Activated CD8-positive, alpha-beta memory T cell treated with anti-CD3 and anti-CD28 coated beads, Interleukin-2, amount 10 ng/mL, durations not matched to agents 7 days and 5 days (primary cell): ENCODE measurements at regions of chr5 and their contacts with region 1.

Region 1: DNA sequence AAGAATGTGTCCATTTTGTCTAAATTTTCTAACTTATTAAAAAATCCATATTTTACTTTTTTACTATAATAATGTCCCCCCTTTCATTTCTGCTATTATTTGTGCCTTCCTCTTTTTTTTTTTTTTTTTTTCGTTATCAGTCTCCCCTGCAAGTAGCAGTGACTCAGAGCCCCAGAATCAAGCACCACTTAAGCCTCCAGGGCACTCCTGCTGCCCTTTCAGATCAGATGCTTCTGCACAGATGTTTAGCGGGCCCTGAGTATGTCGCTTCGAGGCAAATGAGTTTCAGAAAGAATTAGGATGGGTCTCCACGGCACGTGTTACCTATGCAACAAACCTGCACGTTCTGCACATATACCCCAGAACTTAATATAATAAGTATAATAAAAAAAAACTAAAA is 11.7 kb downstream of the MED7 start:
- DNase-seq: no peak
- ATAC-seq: no peak
- H3K4me3 Mint-ChIP-seq: no peak overlapping the region
- H3K27ac Mint-ChIP-seq: no peak overlapping the region
- H3K4me1 Mint-ChIP-seq: peaks cover 29% of the 10 kb centered on the region
- H3K27me3 Mint-ChIP-seq: no peaks in the 10 kb centered on the region

Region 2: GRCh38 chr5:156865427-156865826 is 265.5 kb before region 1 on chr5:
- CTCF ChIA-PET with region 1: no interaction called
- DNase-seq: no peak
- ATAC-seq: no peak
- H3K4me3 Mint-ChIP-seq: no peak overlapping the region
- H3K27ac Mint-ChIP-seq: no peak overlapping the region
- H3K4me1 Mint-ChIP-seq: peaks cover 22% of the 10 kb centered on the region
- H3K27me3 Mint-ChIP-seq: peaks cover 3% of the 10 kb centered on the region

Region 3: DNA sequence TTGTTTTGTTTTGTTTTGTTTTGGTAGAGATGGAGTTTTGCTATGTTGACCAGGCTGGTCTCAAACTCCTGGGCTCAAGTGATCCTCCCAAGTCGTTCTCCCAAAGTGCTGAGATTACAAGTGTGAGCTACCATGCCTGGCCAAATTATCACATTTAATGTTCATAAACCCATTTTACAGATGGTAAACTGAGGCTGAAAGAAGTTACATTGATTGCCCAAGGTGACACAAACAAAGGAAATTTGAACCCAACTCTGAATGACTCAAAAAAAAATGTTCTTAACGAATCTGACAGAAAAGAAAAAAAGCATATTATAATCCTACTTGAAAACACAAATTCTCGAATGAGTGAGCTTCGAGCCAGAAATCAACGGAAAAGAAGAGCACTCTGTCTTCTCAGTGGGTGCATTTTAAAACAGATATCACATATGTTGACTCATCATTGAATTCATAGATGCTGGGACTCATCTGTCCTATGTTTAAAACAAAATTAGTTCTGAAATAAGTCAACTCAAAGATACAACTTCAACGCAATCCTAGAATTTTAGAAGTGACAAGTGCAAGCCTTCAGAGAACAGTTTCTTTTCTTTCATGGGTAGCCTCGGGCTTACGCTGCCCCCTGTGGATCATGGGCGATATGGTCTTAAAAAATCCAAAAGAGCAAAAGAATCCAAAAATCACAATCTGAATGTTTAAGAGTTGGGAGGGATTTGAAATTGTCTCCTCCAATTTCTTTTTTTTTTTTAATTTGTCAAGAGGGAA is 196.3 kb before region 1 on chr5:
- CTCF ChIA-PET with region 1: interaction called, 19 read pairs
- DNase-seq: peak; percentile 80
- ATAC-seq: peak; percentile 84
- H3K4me3 Mint-ChIP-seq: peak overlapping the region; percentile 29
- H3K27ac Mint-ChIP-seq: peak overlapping the region; percentile 78
- H3K4me1 Mint-ChIP-seq: peaks cover 60% of the 10 kb centered on the region
- H3K27me3 Mint-ChIP-seq: no peaks in the 10 kb centered on the region

Region 4: GRCh38 chr5:157108976-157109375 is 21.9 kb before region 1 on chr5 and contains the start of gene HAVCR2:
- CTCF ChIA-PET with region 1: interaction called, 18 read pairs
- DNase-seq: peak; percentile 85
- ATAC-seq: peak; percentile 91
- H3K4me3 Mint-ChIP-seq: peak within 1 kb of the TSS; percentile 88
- H3K27ac Mint-ChIP-seq: peak within 1 kb of the TSS; percentile 96
- H3K4me1 Mint-ChIP-seq: peaks cover 70% of the 10 kb centered on the region
- H3K27me3 Mint-ChIP-seq: no peaks in the 10 kb centered on the region
- total RNA-seq, gene HAVCR2: 51.9 to 108 TPM

Region 5: GRCh38 chr5:157116483-157116954 is 14.4 kb before region 1 on chr5:
- CTCF ChIA-PET with region 1: interaction called, 18 read pairs
- DNase-seq: peak; percentile 55
- ATAC-seq: peak; percentile 60
- H3K4me3 Mint-ChIP-seq: peak overlapping the region; percentile 44
- H3K27ac Mint-ChIP-seq: peak overlapping the region; percentile 66
- H3K4me1 Mint-ChIP-seq: peaks cover 40% of the 10 kb centered on the region
- H3K27me3 Mint-ChIP-seq: no peaks in the 10 kb centered on the region

Region 6: GRCh38 chr5:157142317-157143126 is 11.6 kb after region 1 on chr5 and contains the start of gene MED7:
- CTCF ChIA-PET with region 1: interaction called, 23 read pairs
- DNase-seq: peak; percentile 98
- ATAC-seq: peak; percentile 98
- H3K4me3 Mint-ChIP-seq: peak within 1 kb of the TSS; percentile 83
- H3K27ac Mint-ChIP-seq: peak within 1 kb of the TSS; percentile 97
- H3K4me1 Mint-ChIP-seq: peaks cover 38% of the 10 kb centered on the region
- H3K27me3 Mint-ChIP-seq: no peaks in the 10 kb centered on the region
- total RNA-seq, gene MED7: 15.8 to 17.0 TPM